ENCODE measurements at regions of chr21 and their contacts with region 1.

Region 1: DNA sequence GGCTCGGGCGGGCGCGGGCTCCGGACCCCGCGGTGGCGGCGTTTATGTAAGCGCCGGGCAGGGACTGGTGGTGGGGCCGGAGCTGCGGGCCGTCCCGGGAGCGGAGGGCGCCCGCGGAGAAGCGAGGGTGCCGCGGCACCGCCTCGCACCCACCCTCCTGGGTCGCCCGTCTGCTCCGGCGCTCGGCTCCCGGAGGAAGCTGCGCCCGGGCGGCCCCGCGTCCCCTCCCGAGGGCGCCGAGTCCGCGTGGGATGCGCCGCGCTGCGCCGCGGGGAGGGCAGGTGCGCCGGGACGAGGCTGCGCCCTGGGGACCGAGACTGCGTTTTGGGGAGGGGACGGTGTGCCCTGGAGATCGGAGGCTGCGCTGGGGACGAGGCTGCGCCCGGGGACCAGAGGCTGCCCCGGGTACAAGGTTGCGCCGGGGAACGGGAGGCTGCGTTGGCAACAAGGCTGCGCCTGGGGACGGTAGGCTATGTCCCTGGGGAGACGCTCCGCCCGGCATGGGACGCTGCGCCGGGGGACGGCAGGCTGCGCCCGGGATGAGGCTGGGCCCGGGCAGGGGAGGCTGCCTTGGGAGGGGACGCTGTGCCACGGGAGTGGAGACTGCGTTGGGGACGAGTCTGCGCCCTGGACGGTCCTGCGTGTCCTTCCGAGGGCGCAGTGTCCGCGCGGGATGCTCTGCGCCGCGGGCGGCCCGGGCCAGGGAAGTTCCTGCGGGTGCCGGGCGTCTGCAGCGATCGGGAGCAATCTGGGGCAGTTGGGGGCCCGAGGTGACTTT is 627 bp downstream of the ADARB1 start:
- DNase-seq: peak in 1 of 2 experiments; percentile 64
- H3K4me3 ChIP-seq: peak overlapping the region; percentile 56
- H3K4me1 ChIP-seq: peaks cover 9% of the 10 kb centered on the region; the same call in 1 of the 2 replicates
- H3K27me3 ChIP-seq: no peaks in the 10 kb centered on the region

Region 2: GRCh38 chr21:45129189-45129923 is 54.3 kb after region 1 on chr21:
- in situ Hi-C with region 1: loop called (anchors 5 kb)
- DNase-seq: no peak
- H3K4me3 ChIP-seq: no peak overlapping the region
- H3K4me1 ChIP-seq: no peaks in the 10 kb centered on the region
- H3K27me3 ChIP-seq: no peaks in the 10 kb centered on the region